Heart right ventricle (tissue), 16 donors: ENCODE measurements at regions of chr12 and their contacts with region 1.

Region 1: GRCh38 chr12:47223848-47224213 is 144.1 kb upstream of the AMIGO2 start:
- DNase-seq: peak in 1 of 2 donors; percentile 35
- ATAC-seq: peak in 6 of 8 donors; percentile 37 to 68 (median 62)
- H3K4me3 ChIP-seq: peak overlapping the region in 3 of 10 donors; percentile 15 to 24 (median 16)
- H3K27ac ChIP-seq: peak overlapping the region in 9 of 10 donors; percentile 8 to 74 (median 44)
- H3K4me1 ChIP-seq: peaks cover 0 to 33% (median 17%) of the 10 kb centered on the region in 9 donors
- H3K27me3 ChIP-seq: no peaks in the 10 kb centered on the region
- CTCF ChIP-seq: no peak

Region 2: GRCh38 chr12:47236109-47236714 is 12.4 kb after region 1 on chr12:
- intact Hi-C with region 1: no loop called
- DNase-seq: no peak
- ATAC-seq: peak; percentile 38 to 88 (median 60)
- H3K4me3 ChIP-seq: no peak overlapping the region
- H3K27ac ChIP-seq: peak overlapping the region in 3 of 10 donors; percentile 43 to 79 (median 50)
- H3K4me1 ChIP-seq: peaks cover 0 to 29% (median 12%) of the 10 kb centered on the region in 9 donors
- H3K27me3 ChIP-seq: no peaks in the 10 kb centered on the region
- CTCF ChIP-seq: no peak

Region 3: GRCh38 chr12:47281667-47282171 is 57.9 kb after region 1 on chr12:
- intact Hi-C with region 1: loop called in 1 of 10 experiments (anchors 10 kb)
- DNase-seq: peak in 1 of 2 donors; percentile 6
- ATAC-seq: peak in 7 of 8 donors; percentile 39 to 60 (median 50)
- H3K4me3 ChIP-seq: no peak overlapping the region
- H3K27ac ChIP-seq: peak overlapping the region in 2 of 10 donors; percentile 20 to 21
- H3K4me1 ChIP-seq: peaks cover 6 to 22% (median 14%) of the 10 kb centered on the region in 9 donors
- H3K27me3 ChIP-seq: peaks cover 0 to 3% (median 0%) of the 10 kb centered on the region in 7 donors
- CTCF ChIP-seq: no peak